ENCODE measurements at regions of chr6 and their contacts with region 1.

Region 1: GRCh38 chr6:48476257-48476656 is 365.3 kb upstream of the PTCHD4 start:
- DNase-seq: peak; percentile 40
- H3K4me3 ChIP-seq: no peak overlapping the region
- H3K27ac ChIP-seq: no peak overlapping the region
- H3K4me1 ChIP-seq: peaks cover 16% of the 10 kb centered on the region
- H3K27me3 ChIP-seq: no peaks in the 10 kb centered on the region
- CTCF ChIP-seq: peak; percentile 47 to 60

Region 2: DNA sequence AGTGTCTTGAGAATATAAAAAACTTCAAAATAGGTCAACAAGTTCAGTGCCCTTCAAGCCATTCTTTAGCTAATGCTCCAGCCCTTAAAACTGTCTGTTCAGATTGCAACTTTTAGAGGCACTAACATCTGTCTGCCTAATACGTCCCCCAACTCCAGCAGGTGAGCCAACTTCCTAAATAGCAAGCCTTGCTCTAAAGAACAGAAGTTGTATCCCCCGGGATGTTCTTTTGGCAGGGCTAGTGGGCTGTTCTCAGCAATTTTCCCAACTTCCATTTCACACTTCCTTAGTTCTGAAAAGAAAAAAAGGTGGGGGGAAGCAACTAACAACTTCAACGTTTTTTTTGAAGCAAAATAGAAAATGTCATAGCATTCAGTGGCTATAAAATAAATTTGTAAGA is 75.2 kb before region 1 on chr6:
- CTCF ChIA-PET with region 1: no interaction called
- dilution Hi-C with region 1: no loop called
- in situ Hi-C with region 1: no loop called
- intact Hi-C with region 1: no loop called
- DNase-seq: no peak
- H3K4me3 ChIP-seq: no peak overlapping the region
- H3K27ac ChIP-seq: no peak overlapping the region
- H3K4me1 ChIP-seq: no peaks in the 10 kb centered on the region
- H3K27me3 ChIP-seq: no peaks in the 10 kb centered on the region
- CTCF ChIP-seq: no peak

Region 3: DNA sequence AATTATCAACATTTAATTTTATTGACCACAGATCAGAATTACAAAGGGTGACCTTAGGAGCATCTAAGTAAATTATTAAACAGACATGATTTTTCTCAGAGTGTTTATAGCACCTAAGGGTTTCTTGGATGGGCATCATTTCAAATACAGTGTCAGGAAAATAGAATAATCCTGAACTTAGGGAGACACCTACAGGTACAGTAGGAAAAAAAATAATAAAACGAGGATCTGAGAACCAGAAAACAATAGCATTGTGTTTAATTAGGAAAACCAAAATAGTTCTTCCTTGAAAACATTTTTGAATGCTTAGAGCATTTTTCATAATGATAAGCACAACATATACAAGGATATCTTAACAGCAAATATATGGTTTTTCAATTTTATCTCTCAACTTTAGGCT is 947.6 kb after region 1 on chr6:
- CTCF ChIA-PET with region 1: no interaction called
- dilution Hi-C with region 1: no loop called
- in situ Hi-C with region 1: no loop called
- intact Hi-C with region 1: loop called (anchors 10 kb)
- DNase-seq: peak; percentile 10
- H3K4me3 ChIP-seq: no peak overlapping the region
- H3K27ac ChIP-seq: no peak overlapping the region
- H3K4me1 ChIP-seq: no peaks in the 10 kb centered on the region
- H3K27me3 ChIP-seq: no peaks in the 10 kb centered on the region
- CTCF ChIP-seq: peak; percentile 14 to 51

Measured in mammary epithelial cell (primary cell).